ENCODE measurements at regions of chr11 and their contacts with region 1.

Region 1: GRCh38 chr11:64916775-64917662 is at the start of gene ATG2A:
- DNase-seq: peak; percentile 99
- H3K4me3 Mint-ChIP-seq: peak within 1 kb of the TSS; percentile 88
- H3K27ac Mint-ChIP-seq: peak within 1 kb of the TSS; percentile 82
- H3K4me1 Mint-ChIP-seq: peaks cover 20% of the 10 kb centered on the region
- H3K27me3 Mint-ChIP-seq: no peaks in the 10 kb centered on the region
- total RNA-seq, gene ATG2A: 24.6 and 24.9 TPM in 2 replicates

Region 2: DNA sequence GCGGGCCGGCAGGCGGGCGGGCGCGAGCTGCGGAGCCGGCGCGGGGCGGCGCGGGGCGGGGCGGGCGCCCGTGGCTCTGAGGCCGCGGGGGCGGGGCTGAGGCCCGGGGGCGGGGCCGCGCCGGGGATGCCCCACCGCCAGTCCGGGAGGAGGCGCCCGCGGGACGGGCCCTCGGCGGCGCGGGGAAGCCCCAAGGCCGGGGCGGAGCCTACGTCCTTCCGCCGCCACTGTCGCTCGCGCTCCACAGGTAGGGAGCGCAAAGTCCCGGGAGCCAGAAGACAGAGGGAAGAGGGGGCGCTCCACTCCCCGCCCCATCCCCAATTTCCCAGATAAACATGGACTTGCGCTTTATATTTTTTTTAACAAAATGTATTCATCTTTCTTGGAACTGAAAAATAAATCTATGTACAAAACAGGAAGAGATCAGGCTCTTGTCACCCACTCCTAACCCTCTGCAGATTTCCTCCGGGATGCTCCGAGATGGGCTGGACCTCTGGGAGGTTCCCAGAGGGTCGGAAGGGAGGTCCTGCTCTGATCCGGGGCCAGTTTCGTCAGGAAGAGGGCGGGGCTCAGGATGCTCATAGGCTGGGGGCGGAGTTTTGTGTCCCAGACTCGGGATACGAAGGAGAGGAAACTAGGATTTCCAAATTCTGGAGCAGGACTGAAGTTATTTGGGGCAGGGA is 113.7 kb before region 1 on chr11 and contains the start of gene MAP4K2:
- intact Hi-C with region 1: loop called (anchors 1 kb)
- DNase-seq: peak; percentile 89
- H3K4me3 Mint-ChIP-seq: peak within 1 kb of the TSS; percentile 88
- H3K27ac Mint-ChIP-seq: peak within 1 kb of the TSS; percentile 83
- H3K4me1 Mint-ChIP-seq: peaks cover 26% of the 10 kb centered on the region
- H3K27me3 Mint-ChIP-seq: no peaks in the 10 kb centered on the region
- total RNA-seq, gene MAP4K2: 70.2 and 70.7 TPM in 2 replicates

Region 3: GRCh38 chr11:64856382-64857227 is 60.4 kb before region 1 on chr11:
- intact Hi-C with region 1: loop called (anchors 1 kb)
- DNase-seq: peak; percentile 35
- H3K4me3 Mint-ChIP-seq: peak overlapping the region; percentile 52
- H3K27ac Mint-ChIP-seq: peak overlapping the region; percentile 59
- H3K4me1 Mint-ChIP-seq: peaks cover 78% of the 10 kb centered on the region
- H3K27me3 Mint-ChIP-seq: no peaks in the 10 kb centered on the region

Region 4: GRCh38 chr11:64971421-64972233 is 54.6 kb after region 1 on chr11 and contains the start of gene MAJIN:
- intact Hi-C with region 1: loop called (anchors 2 kb)
- DNase-seq: peak; percentile 77
- H3K4me3 Mint-ChIP-seq: peak within 1 kb of the TSS; percentile 57
- H3K27ac Mint-ChIP-seq: peak within 1 kb of the TSS; percentile 60
- H3K4me1 Mint-ChIP-seq: peaks cover 31% of the 10 kb centered on the region
- H3K27me3 Mint-ChIP-seq: peaks cover 4% of the 10 kb centered on the region
- total RNA-seq, gene MAJIN: not detected in 2 replicates

Region 5: GRCh38 chr11:65040847-65041621 is 124.0 kb after region 1 on chr11 and contains the start of gene SAC3D1:
- intact Hi-C with region 1: loop called (anchors 1 kb)
- DNase-seq: peak; percentile 90
- H3K4me3 Mint-ChIP-seq: peak within 1 kb of the TSS; percentile 90
- H3K27ac Mint-ChIP-seq: peak within 1 kb of the TSS; percentile 93
- H3K4me1 Mint-ChIP-seq: peaks cover 19% of the 10 kb centered on the region
- H3K27me3 Mint-ChIP-seq: no peaks in the 10 kb centered on the region
- total RNA-seq, gene SAC3D1: 17.4 and 17.7 TPM in 2 replicates

Region 6: DNA sequence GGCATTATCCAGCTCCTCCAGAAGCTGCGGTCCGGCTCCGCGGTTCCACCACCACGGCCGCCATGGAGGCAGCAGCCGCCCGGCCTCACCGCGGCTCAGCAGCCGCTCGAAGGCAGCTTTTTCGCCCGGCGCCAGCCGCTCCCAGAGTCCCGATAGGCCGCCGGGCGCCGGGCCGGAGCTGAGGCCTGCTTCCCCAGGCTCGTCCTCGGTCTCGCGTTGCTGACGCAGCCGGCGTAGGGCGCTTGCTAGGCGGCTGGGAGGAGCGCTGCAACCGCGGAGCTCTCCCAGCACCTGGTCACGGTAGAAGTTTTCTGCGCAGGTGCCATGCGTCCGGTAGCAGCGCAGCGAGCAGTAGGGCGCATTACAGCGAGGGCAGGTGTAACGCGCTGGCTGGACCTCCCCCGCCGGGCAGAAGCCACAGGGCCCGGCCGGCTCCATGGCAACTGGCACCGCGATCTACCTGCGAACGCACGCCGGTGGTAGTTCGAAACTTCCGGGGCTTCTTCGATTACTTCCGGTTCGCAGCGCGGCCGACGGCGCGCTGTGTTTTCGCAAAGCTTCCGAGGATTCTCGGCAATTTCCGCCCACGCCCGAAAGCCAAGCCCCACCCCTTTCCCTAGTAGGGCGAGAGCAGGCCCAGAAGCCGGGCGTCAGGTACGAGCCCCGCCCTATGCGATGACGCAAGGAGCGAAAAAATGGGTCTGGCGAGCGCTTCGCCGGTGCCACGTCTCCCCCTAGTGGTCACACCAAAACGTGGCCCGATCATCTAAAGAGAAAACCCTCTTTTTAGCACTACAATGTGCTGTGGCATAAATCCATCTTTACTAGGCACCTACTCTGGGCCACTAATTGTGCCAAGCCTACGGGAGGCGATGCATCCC is 200.4 kb after region 1 on chr11 and contains the start of gene ZNHIT2:
- intact Hi-C with region 1: loop called (anchors 1 kb)
- DNase-seq: peak; percentile 100
- H3K4me3 Mint-ChIP-seq: peak within 1 kb of the TSS; percentile 90
- H3K27ac Mint-ChIP-seq: peak within 1 kb of the TSS; percentile 93
- H3K4me1 Mint-ChIP-seq: peaks cover 52% of the 10 kb centered on the region
- H3K27me3 Mint-ChIP-seq: no peaks in the 10 kb centered on the region
- total RNA-seq, gene ZNHIT2: 20.8 and 22.1 TPM in 2 replicates

Region 7: DNA sequence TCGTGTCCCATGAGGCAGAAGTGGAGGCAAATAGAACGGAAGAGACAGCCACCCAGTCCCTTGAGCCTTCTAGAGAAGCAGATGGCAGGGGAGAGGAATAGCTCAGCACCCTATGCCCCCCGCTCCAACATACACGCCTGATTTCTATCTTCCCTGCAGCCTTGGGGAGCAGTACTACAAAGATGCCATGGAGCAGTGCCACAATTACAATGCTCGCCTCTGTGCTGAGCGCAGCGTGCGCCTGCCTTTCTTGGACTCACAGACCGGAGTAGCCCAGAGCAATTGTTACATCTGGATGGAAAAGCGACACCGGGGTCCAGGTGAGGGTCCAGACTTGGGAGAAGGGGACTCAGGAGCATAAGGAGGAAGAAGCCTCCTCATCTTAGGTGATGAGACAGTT is 423.2 kb after region 1 on chr11:
- intact Hi-C with region 1: no loop called
- DNase-seq: no peak
- H3K4me3 Mint-ChIP-seq: no peak overlapping the region
- H3K27ac Mint-ChIP-seq: no peak overlapping the region
- H3K4me1 Mint-ChIP-seq: peaks cover 23% of the 10 kb centered on the region
- H3K27me3 Mint-ChIP-seq: no peaks in the 10 kb centered on the region